ENCODE measurements at regions of chr1 and their contacts with region 1.

Region 1: GRCh38 chr1:12161662-12162458 is 4.9 kb upstream of the TNFRSF1B start:
- DNase-seq: peak; percentile 89
- ATAC-seq: peak; percentile 84
- H3K4me3 Mint-ChIP-seq: peak overlapping the region; percentile 15
- H3K27ac Mint-ChIP-seq: peak overlapping the region; percentile 91
- H3K4me1 Mint-ChIP-seq: peaks cover 73% of the 10 kb centered on the region
- H3K27me3 Mint-ChIP-seq: no peaks in the 10 kb centered on the region

Region 2: DNA sequence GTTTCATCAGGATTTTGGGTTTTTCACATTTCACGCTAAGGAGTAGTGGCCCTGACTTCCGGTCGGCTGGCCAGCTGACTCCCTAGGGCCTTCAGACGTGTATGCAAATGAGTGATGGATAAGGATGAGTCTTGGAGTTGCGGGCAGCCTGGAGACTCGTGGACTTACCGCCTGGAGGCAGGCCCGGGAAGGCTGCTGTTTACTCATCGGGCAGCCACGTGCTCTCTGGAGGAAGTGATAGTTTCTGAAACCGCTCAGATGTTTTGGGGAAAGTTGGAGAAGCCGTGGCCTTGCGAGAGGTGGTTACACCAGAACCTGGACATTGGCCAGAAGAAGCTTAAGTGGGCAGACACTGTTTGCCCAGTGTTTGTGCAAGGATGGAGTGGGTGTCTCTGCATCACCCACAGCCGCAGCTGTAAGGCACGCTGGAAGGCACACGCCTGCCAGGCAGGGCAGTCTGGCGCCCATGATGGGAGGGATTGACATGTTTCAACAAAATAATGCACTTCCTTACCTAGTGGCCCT is 18.2 kb before region 1 on chr1:
- CTCF ChIA-PET with region 1: interaction called, 11 read pairs
- POLR2A ChIA-PET with region 1: interaction called, 4 read pairs
- intact Hi-C with region 1: no loop called
- DNase-seq: peak; percentile 51
- ATAC-seq: peak; percentile 45
- H3K4me3 Mint-ChIP-seq: no peak overlapping the region
- H3K27ac Mint-ChIP-seq: peak overlapping the region; percentile 48
- H3K4me1 Mint-ChIP-seq: peaks cover 41% of the 10 kb centered on the region
- H3K27me3 Mint-ChIP-seq: no peaks in the 10 kb centered on the region